ENCODE measurements at regions of chr17 and their contacts with region 1.

Region 1: DNA sequence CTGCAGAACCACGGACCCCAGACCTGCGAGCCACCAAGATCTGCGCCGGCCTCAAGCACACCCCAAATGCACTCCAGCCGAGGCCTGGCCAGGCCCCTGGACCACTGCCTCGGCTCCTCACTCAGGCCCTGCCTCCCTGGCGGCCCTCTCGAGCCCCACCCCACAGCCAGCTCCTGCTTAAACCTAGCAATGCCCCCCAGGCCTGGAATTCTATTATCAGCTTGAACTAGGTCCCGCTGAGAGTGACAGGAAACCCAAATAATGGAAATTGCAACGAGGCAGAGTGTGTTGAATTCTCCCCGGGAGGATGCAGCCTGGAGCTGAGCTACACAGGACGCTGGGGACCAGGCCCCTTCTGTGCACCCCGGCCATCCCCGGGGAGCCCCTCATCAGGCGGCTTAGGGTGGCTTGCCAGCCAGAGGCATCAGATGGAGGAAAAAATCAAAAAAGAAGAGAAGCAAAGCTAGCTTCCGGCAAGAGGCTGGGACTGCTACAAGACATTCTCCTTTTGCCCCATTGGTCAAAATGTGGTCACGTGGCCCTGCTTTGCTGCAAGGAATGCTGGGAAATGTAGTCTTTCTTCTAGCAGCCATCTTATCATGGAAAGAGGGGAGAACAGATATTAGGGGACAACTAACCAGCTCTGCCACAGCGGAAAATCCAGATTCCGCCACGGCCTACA is 2.4 kb upstream of the ENPP7 start:
- DNase-seq: peak; percentile 91
- ATAC-seq: peak; percentile 53
- H3K4me3 ChIP-seq: peak overlapping the region in 4 of 5 experiments; percentile 35 to 58 (median 44)
- H3K4me3 Mint-ChIP-seq: peak overlapping the region; percentile 83
- H3K27ac ChIP-seq: peak overlapping the region in 1 of 2 donors; percentile 41
- H3K27ac Mint-ChIP-seq: peak overlapping the region; percentile 53
- H3K4me1 ChIP-seq: peaks cover 16 to 26% of the 10 kb centered on the region in 2 donors
- H3K4me1 Mint-ChIP-seq: peaks cover 46% of the 10 kb centered on the region
- H3K27me3 ChIP-seq: no peaks in the 10 kb centered on the region
- H3K27me3 Mint-ChIP-seq: no peaks in the 10 kb centered on the region
- CTCF ChIP-seq: no peak

Region 2: DNA sequence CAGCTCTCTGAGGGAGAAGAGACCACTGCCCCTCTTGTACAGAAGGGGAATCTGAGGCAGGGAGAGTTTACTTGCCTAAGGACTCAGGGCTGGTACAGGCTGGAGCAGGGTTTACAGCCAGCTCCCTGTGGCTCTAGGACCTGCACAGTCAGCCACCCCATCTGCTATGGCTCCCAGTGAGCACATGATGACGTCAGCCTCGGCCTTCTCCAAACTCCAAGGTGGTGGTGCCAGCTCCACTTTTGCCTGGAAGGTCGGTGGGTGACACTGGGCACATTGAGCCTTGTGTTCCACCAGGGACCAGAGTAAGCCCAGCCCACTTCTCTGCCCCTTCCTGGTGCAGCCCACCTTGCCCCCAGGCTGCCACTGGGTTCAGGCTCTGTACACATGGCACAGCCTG is 451.5 kb before region 1 on chr17:
- CTCF ChIA-PET with region 1: no interaction called
- POLR2A ChIA-PET with region 1: no interaction called
- intact Hi-C with region 1: no loop called
- DNase-seq: no peak
- ATAC-seq: no peak
- H3K4me3 ChIP-seq: no peak overlapping the region
- H3K4me3 Mint-ChIP-seq: no peak overlapping the region
- H3K27ac ChIP-seq: no peak overlapping the region
- H3K27ac Mint-ChIP-seq: no peak overlapping the region
- H3K4me1 ChIP-seq: no peaks in the 10 kb centered on the region
- H3K4me1 Mint-ChIP-seq: peaks cover 3% of the 10 kb centered on the region
- H3K27me3 ChIP-seq: peaks cover 0 to 4% (median 1%) of the 10 kb centered on the region in 4 experiments
- H3K27me3 Mint-ChIP-seq: peaks cover 14% of the 10 kb centered on the region
- CTCF ChIP-seq: no peak

Region 3: DNA sequence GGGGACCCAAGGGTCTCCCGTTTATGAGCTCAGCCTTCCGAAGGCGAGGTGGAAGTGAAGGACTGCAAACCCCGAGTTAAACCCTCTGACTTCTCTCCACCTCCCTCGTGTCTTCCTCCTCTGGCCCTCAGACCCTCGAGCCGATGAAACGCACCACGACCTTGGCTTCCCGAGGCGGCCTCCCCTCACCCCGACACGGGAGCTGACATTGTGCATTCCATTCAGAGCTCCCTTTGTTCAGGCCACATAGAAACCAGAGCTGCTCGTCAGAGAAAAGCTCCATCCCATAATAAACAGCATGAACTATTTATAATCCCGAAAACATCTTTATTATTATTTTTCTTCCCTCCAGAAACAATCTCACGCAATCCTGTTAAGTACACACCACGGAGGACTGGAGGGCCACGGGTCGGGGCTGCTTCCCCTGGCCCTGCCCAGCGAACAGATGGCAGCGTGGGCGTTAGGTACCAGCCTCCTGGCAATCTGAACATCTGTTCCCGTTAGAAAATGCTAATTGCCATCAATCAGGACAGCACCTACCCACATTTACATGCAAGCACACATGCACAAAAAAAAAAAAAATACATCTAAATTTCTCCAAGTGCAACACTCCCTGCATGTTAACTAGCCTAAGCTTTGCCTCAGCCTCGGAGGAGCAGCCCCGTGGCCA is 263.2 kb before region 1 on chr17:
- CTCF ChIA-PET with region 1: no interaction called
- POLR2A ChIA-PET with region 1: no interaction called
- intact Hi-C with region 1: no loop called
- DNase-seq: no peak
- ATAC-seq: no peak
- H3K4me3 ChIP-seq: no peak overlapping the region
- H3K4me3 Mint-ChIP-seq: no peak overlapping the region
- H3K27ac ChIP-seq: no peak overlapping the region
- H3K27ac Mint-ChIP-seq: no peak overlapping the region
- H3K4me1 ChIP-seq: no peaks in the 10 kb centered on the region
- H3K4me1 Mint-ChIP-seq: peaks cover 1% of the 10 kb centered on the region
- H3K27me3 ChIP-seq: no peaks in the 10 kb centered on the region
- H3K27me3 Mint-ChIP-seq: no peaks in the 10 kb centered on the region
- CTCF ChIP-seq: no peak

Region 4: DNA sequence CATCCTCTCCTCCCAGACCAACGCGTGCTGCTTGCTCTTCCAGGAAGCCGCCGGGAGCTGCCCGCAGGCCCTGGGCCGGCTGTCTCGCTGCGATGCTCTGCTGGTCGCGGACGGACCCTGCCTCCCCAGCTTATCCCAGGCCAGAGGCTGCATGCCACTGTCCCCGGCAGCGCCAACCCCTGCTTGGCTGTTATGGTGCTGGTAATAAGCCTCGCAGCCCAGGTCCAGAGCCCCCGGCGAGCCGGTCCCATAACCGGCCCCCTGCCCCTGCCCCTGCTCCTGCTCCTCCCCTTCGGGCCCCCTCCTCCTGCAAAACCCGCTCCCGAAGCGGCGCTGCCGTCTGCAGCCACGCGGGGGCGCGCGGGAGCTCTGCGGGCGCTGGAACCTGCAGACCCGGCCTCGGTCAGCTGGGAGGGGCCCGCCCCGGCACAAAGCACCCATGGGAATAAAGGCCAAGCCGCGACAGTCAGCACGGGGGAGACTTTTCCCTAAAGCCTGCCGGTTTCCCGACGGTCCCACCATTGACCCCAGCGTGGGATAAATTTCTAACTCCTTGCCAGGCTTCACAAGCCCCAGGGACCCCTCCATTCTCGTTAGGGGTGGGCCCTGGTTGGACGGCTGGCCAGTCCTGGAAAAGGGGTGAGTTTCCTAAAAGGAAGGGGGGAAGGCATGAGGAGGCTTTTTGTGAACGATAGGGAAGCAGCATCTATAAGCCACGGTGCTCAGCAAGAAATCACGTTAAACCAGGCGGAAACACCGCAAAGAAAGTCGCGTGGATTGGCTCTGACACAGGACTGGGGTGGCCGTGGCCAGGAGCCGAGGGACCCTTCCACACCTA is 13.6 kb after region 1 on chr17:
- CTCF ChIA-PET with region 1: interaction called, 21 read pairs
- POLR2A ChIA-PET with region 1: interaction called, 3 read pairs
- intact Hi-C with region 1: no loop called
- DNase-seq: peak; percentile 78
- ATAC-seq: peak; percentile 80
- H3K4me3 ChIP-seq: no peak overlapping the region
- H3K4me3 Mint-ChIP-seq: peak overlapping the region; percentile 29
- H3K27ac ChIP-seq: no peak overlapping the region
- H3K27ac Mint-ChIP-seq: no peak overlapping the region
- H3K4me1 ChIP-seq: peaks cover 16 to 24% of the 10 kb centered on the region in 2 donors
- H3K4me1 Mint-ChIP-seq: peaks cover 11% of the 10 kb centered on the region
- H3K27me3 ChIP-seq: peaks cover 0 to 29% (median 17%) of the 10 kb centered on the region in 4 experiments
- H3K27me3 Mint-ChIP-seq: peaks cover 27% of the 10 kb centered on the region
- CTCF ChIP-seq: peak; percentile 95

Region 5: GRCh38 chr17:79749156-79749815 is 20.9 kb after region 1 on chr17:
- CTCF ChIA-PET with region 1: interaction called, 19 read pairs
- POLR2A ChIA-PET with region 1: no interaction called
- intact Hi-C with region 1: no loop called
- DNase-seq: no peak
- ATAC-seq: no peak
- H3K4me3 ChIP-seq: no peak overlapping the region
- H3K4me3 Mint-ChIP-seq: no peak overlapping the region
- H3K27ac ChIP-seq: no peak overlapping the region
- H3K27ac Mint-ChIP-seq: no peak overlapping the region
- H3K4me1 ChIP-seq: peaks cover 25 to 28% of the 10 kb centered on the region in 2 donors
- H3K4me1 Mint-ChIP-seq: peaks cover 23% of the 10 kb centered on the region
- H3K27me3 ChIP-seq: peaks cover 0 to 67% (median 33%) of the 10 kb centered on the region in 4 experiments
- H3K27me3 Mint-ChIP-seq: peaks cover 51% of the 10 kb centered on the region
- CTCF ChIP-seq: no peak

Region 6: DNA sequence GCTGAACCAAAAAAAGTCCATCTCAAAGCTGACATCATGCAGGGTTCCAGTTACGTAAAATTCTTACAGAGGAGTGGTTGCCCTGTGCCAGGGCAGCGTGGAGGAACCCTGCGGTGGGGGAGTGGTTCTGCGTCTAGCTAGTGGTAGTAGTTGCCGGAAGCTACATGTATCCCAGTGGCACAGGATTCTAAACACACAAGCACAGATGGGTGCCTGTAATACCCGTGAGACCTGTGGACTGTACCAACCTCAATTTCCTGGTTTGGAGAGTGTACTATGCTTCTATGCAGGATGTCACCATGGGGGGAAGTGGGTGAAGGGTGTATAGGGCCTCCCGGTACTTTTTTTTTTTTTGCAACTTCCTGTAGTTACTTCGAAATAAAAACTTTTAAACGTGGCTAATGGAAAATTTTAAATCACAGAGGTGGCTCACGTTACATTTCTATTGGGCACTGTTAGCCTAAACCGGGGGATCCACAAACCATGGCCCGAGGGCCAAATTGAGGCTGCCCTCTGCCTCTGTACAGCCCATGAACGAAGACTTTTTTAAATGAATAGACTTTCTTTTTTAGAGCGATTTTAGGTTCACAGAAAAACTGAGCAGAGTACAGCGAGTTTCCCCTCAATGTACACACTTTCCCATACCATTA is 268.8 kb after region 1 on chr17:
- CTCF ChIA-PET with region 1: interaction called, 3 read pairs
- POLR2A ChIA-PET with region 1: no interaction called
- intact Hi-C with region 1: loop called (anchors 1 kb)
- DNase-seq: peak; percentile 90
- ATAC-seq: peak; percentile 98
- H3K4me3 ChIP-seq: peak overlapping the region; percentile 1 to 45 (median 19)
- H3K4me3 Mint-ChIP-seq: peak overlapping the region; percentile 80
- H3K27ac ChIP-seq: peak overlapping the region; percentile 71 to 81
- H3K27ac Mint-ChIP-seq: peak overlapping the region; percentile 95
- H3K4me1 ChIP-seq: peaks cover 32 to 40% of the 10 kb centered on the region in 2 donors
- H3K4me1 Mint-ChIP-seq: peaks cover 41% of the 10 kb centered on the region
- H3K27me3 ChIP-seq: peaks cover 0 to 11% (median 0%) of the 10 kb centered on the region in 4 experiments
- H3K27me3 Mint-ChIP-seq: peaks cover 5% of the 10 kb centered on the region
- CTCF ChIP-seq: no peak